ENCODE measurements at regions of chr10 and their contacts with region 1.

Region 1: GRCh38 chr10:14185316-14186045 is 145.2 kb downstream of the FRMD4A start:
- DNase-seq: peak; percentile 73
- H3K4me3 Mint-ChIP-seq: peak overlapping the region; percentile 61
- H3K27ac Mint-ChIP-seq: peak overlapping the region; percentile 96
- H3K4me1 Mint-ChIP-seq: peaks cover 29% of the 10 kb centered on the region
- H3K27me3 Mint-ChIP-seq: peaks cover 27% of the 10 kb centered on the region

Region 2: GRCh38 chr10:13586676-13587355 is 598.7 kb before region 1 on chr10 and contains the start of gene PRPF18:
- CTCF ChIA-PET with region 1: no interaction called
- intact Hi-C with region 1: loop called (anchors 1 kb)
- DNase-seq: peak; percentile 96
- H3K4me3 Mint-ChIP-seq: peak within 1 kb of the TSS; percentile 99
- H3K27ac Mint-ChIP-seq: peak within 1 kb of the TSS; percentile 87
- H3K4me1 Mint-ChIP-seq: peaks cover 27% of the 10 kb centered on the region
- H3K27me3 Mint-ChIP-seq: peaks cover 2% of the 10 kb centered on the region
- total RNA-seq, gene PRPF18: 20.2 to 20.8 TPM

Region 3: DNA sequence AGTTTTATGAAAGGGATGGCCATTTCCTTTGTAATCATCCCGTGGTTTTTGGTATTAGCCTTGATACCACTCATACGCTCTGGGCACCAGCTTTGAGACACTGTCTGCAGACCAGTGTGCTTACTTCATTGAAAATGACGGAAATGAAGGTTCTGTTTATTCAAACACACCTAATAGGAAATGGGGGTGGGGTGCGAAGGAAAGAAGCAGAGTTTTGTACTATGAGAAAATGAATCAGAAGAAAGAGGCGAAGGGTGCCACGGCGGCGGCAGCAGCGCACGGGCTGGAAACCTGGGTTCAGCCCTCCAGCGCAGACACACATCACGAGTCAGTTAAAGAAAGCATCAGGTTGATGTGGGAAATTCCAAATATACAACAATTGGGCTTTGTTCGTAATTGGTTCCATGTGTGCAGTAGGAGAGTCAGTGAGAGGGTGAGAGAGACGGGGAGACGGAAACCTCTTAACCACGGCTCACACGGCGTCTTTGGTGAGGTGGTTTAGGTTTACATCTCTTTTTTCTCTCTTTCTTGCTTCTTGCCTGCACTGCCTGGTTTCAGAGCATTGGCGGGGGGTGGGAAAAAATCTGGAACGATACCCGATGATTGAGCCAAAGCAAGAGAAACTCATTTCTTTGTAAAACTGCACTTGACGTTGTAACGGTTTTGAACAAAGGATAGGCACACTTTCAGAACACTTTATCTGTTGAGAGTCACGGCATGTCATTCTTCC is 175.9 kb before region 1 on chr10:
- CTCF ChIA-PET with region 1: no interaction called
- intact Hi-C with region 1: loop called (anchors 1 kb)
- DNase-seq: peak; percentile 84
- H3K4me3 Mint-ChIP-seq: peak overlapping the region; percentile 79
- H3K27ac Mint-ChIP-seq: peak overlapping the region; percentile 90
- H3K4me1 Mint-ChIP-seq: peaks cover 35% of the 10 kb centered on the region
- H3K27me3 Mint-ChIP-seq: no peaks in the 10 kb centered on the region

Region 4: DNA sequence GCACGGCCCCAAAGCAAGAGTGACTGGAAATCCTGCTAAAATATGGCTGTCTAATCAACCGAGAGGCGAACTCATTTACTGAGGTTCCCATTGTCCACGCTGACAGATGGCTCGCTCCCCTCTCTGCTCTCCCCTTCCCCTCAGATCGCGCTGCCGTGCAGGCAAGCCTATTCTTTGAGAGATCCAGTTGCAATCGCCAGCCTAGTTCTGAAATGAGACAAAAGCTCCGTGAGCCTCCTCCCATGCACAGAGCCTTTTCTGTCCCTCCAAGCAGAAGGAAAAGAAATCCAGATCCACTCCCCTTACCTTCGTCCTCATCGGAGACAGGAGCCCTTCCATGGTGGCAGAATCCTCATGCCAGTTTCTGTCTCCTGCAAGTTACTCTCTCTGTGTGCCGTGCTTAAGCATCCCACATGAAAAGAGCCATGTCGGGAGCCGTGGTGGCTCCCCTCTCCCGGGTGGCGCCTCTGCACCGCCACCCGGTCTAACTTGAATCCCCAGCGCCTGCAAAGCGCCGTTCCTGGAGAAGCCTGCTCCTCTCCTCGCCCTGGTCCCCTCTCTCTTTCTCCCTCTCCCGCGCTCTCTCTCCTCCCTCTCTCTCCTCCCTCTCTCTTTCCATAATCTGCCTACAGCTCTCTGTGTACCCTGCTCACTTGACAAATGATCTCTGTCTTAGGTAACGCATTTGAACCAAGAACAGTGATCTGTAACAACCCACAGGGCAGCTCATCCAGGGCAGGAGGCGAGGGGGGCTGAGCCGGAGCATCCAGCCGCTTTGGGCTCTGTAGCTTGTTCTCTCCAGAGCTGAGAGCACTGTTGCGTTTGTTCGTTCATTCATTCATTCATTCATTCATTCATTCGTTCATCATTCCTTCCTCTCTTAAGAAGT is 11.5 kb before region 1 on chr10:
- CTCF ChIA-PET with region 1: no interaction called
- intact Hi-C with region 1: no loop called
- DNase-seq: peak; percentile 28
- H3K4me3 Mint-ChIP-seq: peak overlapping the region; percentile 66
- H3K27ac Mint-ChIP-seq: no peak overlapping the region
- H3K4me1 Mint-ChIP-seq: peaks cover 15% of the 10 kb centered on the region
- H3K27me3 Mint-ChIP-seq: peaks cover 61% of the 10 kb centered on the region

Region 5: DNA sequence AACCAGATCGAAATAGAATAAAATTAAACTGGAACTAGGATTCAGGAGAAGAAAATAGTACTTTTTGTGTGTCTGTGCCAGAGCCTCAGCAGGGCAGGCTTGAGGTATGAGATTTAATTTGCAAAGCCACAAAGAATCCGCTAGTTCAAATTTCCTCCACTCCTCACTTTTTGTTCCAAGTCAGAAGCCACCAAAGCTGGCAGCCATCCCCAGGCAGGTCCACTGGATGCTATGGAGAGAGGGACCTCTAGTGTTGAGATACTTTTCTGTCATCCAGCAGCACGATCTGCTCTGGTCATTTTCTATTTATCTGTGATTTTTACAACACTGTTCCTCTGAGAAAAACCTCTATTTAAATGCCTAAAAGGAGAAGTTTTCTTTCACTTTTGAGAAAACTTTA is 293.1 kb after region 1 on chr10:
- CTCF ChIA-PET with region 1: interaction called, 3 read pairs
- intact Hi-C with region 1: loop called (anchors 1 kb)
- DNase-seq: peak; percentile 57
- H3K4me3 Mint-ChIP-seq: no peak overlapping the region
- H3K27ac Mint-ChIP-seq: no peak overlapping the region
- H3K4me1 Mint-ChIP-seq: peaks cover 2% of the 10 kb centered on the region
- H3K27me3 Mint-ChIP-seq: peaks cover 5% of the 10 kb centered on the region

Region 6: DNA sequence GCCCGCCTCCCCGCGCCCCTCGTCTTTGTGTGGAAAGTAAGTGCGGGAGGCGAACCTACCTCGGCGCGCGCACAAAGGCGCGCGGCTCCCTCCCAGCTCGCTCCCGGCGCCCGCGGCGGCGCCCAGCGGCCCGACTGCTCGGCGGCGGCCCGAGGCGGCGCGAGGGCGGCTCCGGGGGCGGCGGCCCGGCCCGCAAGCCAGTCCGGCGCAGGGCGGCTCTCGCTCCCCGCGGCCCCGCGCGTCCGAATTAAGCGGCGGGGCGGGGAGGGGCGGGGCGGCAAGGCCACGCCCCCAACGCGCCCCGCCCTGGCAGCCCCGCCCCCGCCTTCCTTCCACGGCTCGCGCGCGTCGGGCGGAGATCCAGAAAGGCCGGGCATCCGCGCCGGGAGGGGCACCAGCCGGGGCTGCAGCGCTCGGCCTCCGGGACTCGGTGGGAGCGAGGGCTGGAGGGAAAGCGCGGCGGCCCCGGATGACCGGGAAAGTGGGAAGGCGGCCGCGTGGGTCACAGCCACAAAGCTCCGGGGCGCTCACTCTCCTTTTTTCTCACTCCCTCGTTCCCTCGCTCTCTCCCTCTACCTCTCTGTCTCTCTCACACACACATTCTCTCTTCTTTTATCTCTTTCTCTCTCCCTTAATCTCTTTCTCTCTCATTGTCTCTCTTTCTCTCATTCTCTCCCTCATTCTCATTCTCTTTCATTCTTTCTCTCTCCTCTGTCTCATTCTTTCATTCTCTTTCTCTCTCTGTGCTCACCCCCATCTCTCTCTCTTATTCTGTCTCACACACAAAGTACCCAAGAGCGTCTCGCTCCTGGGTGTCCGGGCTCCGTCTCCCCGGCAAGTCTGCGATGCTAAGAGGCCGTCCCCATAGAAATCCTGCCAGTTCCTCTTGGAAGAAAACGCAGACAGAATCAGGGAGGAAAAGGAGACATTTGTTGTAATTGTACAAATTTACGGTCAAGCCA is 419.0 kb after region 1 on chr10:
- CTCF ChIA-PET with region 1: no interaction called
- intact Hi-C with region 1: loop called (anchors 1 kb)
- DNase-seq: peak; percentile 66
- H3K4me3 Mint-ChIP-seq: peak overlapping the region; percentile 87
- H3K27ac Mint-ChIP-seq: peak overlapping the region; percentile 94
- H3K4me1 Mint-ChIP-seq: peaks cover 63% of the 10 kb centered on the region
- H3K27me3 Mint-ChIP-seq: no peaks in the 10 kb centered on the region

Region 7: DNA sequence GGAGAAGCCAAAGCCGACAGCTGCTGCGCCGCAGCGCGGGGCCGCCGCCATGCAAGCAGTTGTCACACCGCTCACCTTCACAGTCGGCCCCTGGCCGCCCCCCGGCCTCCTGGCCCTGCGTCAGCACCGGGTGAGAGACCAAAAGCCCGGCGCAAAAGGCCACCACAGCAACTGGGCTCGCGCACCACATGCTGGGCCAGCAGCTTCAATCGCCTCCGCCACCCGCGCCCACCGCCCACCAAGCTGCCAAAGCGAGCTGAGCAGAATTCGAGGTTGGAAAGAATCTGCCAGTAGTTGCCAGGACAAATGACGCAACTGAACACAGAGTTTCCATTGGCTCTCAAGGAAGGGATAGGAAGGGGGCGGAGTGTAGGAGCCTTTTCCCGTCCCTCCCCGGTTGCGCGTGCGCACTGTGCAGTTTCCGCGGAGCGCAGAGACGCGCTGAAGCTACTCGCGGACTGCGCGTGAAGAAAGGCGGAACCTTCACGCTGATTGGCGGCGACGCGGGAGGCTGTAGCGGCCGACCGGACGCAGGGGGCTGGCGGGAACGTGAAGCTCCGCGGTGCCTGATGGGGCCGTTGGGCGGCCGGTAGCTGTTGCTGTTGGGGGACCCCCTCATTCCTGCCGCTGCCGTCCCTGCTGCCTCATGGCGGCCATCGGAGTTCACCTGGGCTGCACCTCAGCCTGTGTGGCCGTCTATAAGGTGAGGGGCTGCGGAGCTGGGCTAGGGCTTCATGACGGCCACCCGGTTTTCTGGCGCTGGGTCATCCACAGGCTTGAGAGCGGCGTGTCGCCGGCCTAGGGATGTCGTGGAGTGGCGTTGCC is 652.5 kb after region 1 on chr10 and contains the starts of genes CDNF, HSPA14 and MSANTD7:
- CTCF ChIA-PET with region 1: interaction called, 3 read pairs
- intact Hi-C with region 1: loop called (anchors 1 kb)
- DNase-seq: peak; percentile 99
- H3K4me3 Mint-ChIP-seq: peak within 1 kb of the TSS; percentile 92
- H3K27ac Mint-ChIP-seq: peak within 1 kb of the TSS; percentile 93
- H3K4me1 Mint-ChIP-seq: peaks cover 22% of the 10 kb centered on the region
- H3K27me3 Mint-ChIP-seq: no peaks in the 10 kb centered on the region
- total RNA-seq, gene CDNF: 1.6 to 1.8 TPM
- total RNA-seq, gene HSPA14: 28.1 to 29.9 TPM
- total RNA-seq, gene MSANTD7: 19.6 to 21.3 TPM

Region 8: GRCh38 chr10:15122477-15123030 is 937.1 kb after region 1 on chr10:
- CTCF ChIA-PET with region 1: no interaction called
- intact Hi-C with region 1: loop called (anchors 10 kb)
- DNase-seq: peak; percentile 59
- H3K4me3 Mint-ChIP-seq: no peak overlapping the region
- H3K27ac Mint-ChIP-seq: peak overlapping the region; percentile 86
- H3K4me1 Mint-ChIP-seq: peaks cover 32% of the 10 kb centered on the region
- H3K27me3 Mint-ChIP-seq: no peaks in the 10 kb centered on the region

Measured in activated naive CD4-positive, alpha-beta T cell treated with anti-CD3 and anti-CD28 coated beads for 36 hours (primary cell).